ENCODE measurements at regions of chr12 and their contacts with region 1.

Region 1: GRCh38 chr12:9607716-9608115 is at the start of gene KLRB1:
- DNase-seq: peak in 1 of 2 donors; percentile 23
- ATAC-seq: peak in 1 of 3 donors; percentile 17
- H3K4me3 ChIP-seq: peak within 1 kb of the TSS; percentile 57
- H3K4me3 Mint-ChIP-seq: peak within 1 kb of the TSS; percentile 97
- H3K27ac ChIP-seq: peak within 1 kb of the TSS; percentile 81
- H3K27ac Mint-ChIP-seq: peak within 1 kb of the TSS; percentile 91 to 97
- H3K4me1 ChIP-seq: peaks cover 12% of the 10 kb centered on the region
- H3K4me1 Mint-ChIP-seq: peaks cover 69 to 78% of the 10 kb centered on the region in 2 donors
- H3K27me3 ChIP-seq: no peaks in the 10 kb centered on the region
- H3K27me3 Mint-ChIP-seq: no peaks in the 10 kb centered on the region
- CTCF ChIP-seq: no peak
- total RNA-seq, gene KLRB1: 194 to 310 (median 216) TPM

Region 2: DNA sequence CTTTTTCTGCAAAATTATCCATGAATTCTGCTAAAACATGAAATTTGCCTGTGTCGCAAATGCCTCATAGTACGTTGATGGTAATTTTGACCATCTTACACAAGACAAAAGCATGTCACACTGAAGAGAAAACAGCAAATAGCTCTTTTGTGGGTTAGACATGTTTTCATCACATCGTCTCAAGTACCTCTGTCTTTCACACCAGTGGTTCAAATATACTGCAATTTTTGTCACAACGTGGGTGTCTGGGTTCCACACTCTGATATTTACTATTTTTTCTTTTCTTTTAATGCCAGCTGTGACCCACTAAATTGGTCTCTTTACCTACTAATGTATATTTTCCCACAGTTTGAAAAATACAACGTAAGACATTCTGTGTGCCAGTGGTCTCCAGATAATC is 10.4 kb before region 1 on chr12:
- intact Hi-C with region 1: loop called (anchors 1 kb)
- DNase-seq: no peak
- ATAC-seq: peak; percentile 87 to 96 (median 92)
- H3K4me3 ChIP-seq: no peak overlapping the region
- H3K4me3 Mint-ChIP-seq: peak overlapping the region; percentile 74
- H3K27ac ChIP-seq: peak overlapping the region; percentile 61
- H3K27ac Mint-ChIP-seq: peak overlapping the region; percentile 90 to 97
- H3K4me1 ChIP-seq: no peaks in the 10 kb centered on the region
- H3K4me1 Mint-ChIP-seq: peaks cover 48 to 76% of the 10 kb centered on the region in 2 donors
- H3K27me3 ChIP-seq: no peaks in the 10 kb centered on the region
- H3K27me3 Mint-ChIP-seq: no peaks in the 10 kb centered on the region
- CTCF ChIP-seq: no peak

Measured in natural killer cell (primary cell).